ENCODE measurements at regions of chr18 and their contacts with region 1.

Region 1: GRCh38 chr18:8121942-8122480 is 487.2 kb upstream of the RAB12 start:
- DNase-seq: no peak
- ATAC-seq: no peak
- H3K4me3 ChIP-seq: no peak overlapping the region
- H3K4me3 Mint-ChIP-seq: no peak overlapping the region
- H3K27ac ChIP-seq: no peak overlapping the region
- H3K27ac Mint-ChIP-seq: no peak overlapping the region
- H3K4me1 ChIP-seq: no peaks in the 10 kb centered on the region
- H3K4me1 Mint-ChIP-seq: no peaks in the 10 kb centered on the region
- H3K27me3 ChIP-seq: no peaks in the 10 kb centered on the region
- H3K27me3 Mint-ChIP-seq: no peaks in the 10 kb centered on the region

Region 2: GRCh38 chr18:8045884-8046281 is 76.1 kb before region 1 on chr18:
- CTCF ChIA-PET with region 1: no interaction called
- POLR2A ChIA-PET with region 1: interaction called in 1 of 2 experiments, 10 read pairs
- DNase-seq: peak in 26 of 35 experiments; percentile 1 to 51 (median 11)
- ATAC-seq: peak in 1 of 4 experiments; percentile 62
- H3K4me3 ChIP-seq: no peak overlapping the region
- H3K4me3 Mint-ChIP-seq: no peak overlapping the region
- H3K27ac ChIP-seq: no peak overlapping the region
- H3K27ac Mint-ChIP-seq: peak overlapping the region in 1 of 2 donors; percentile 34
- H3K4me1 ChIP-seq: peaks cover 4 to 5% of the 10 kb centered on the region in 2 experiments
- H3K4me1 Mint-ChIP-seq: peaks cover 6 to 14% (median 12%) of the 10 kb centered on the region in 3 donors
- H3K27me3 ChIP-seq: no peaks in the 10 kb centered on the region
- H3K27me3 Mint-ChIP-seq: no peaks in the 10 kb centered on the region

Measured in T-cell (primary cell).